ENCODE measurements at regions of chr11 and their contacts with region 1.

Region 1: DNA sequence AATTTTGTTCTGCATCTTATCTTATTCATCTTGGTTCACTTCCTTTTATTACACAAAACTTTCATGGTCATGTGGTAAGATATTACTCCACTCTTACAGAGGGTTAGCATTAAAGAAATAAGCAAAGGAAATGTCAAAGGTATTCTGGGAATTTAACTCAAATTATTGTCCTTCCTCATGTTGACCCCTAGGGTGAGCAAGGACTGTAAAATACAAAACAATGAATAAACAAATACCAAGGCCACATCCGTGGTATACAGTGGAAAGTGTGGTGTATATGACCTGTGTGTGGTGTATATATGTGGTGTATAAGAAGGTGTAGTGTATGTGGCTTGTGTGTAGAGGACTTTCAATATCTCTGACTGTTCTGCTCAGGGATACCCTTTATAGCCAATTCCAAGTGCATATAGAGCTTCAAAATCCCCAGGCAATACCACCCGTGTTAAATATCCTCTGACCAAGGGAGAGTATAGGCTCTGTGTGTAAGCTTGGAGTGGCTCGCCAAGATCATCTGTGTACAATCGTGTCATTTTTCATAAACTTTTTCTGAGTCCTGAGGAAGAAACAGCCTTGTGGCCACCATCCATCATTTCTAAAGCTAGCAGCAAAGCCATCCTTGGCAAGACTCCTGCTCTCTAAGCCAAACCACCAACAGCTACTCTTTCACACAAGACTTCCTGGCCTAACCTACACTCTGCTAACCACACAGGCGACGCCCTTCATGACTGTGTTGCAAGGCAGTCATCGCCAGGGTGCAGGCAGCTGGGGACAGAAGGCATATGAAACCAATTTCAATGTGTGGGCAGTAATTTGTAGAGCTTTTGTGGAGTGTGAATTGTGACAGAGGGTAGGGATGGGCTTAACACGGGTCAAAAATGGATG is 548.0 kb downstream of the ETS1 start:
- DNase-seq: peak; percentile 55 to 94 (median 72)
- ATAC-seq: peak; percentile 96
- H3K4me3 ChIP-seq: peak overlapping the region; percentile 47
- H3K4me3 Mint-ChIP-seq: peak overlapping the region; percentile 72
- H3K27ac ChIP-seq: peak overlapping the region; percentile 29 to 50
- H3K27ac Mint-ChIP-seq: no peak overlapping the region
- H3K4me1 ChIP-seq: peaks cover 64% of the 10 kb centered on the region
- H3K4me1 Mint-ChIP-seq: peaks cover 59% of the 10 kb centered on the region
- H3K27me3 ChIP-seq: no peaks in the 10 kb centered on the region
- H3K27me3 Mint-ChIP-seq: no peaks in the 10 kb centered on the region
- CTCF ChIP-seq: peak; percentile 8

Region 2: GRCh38 chr11:128052912-128053641 is 13.7 kb after region 1 on chr11:
- CTCF ChIA-PET with region 1: interaction called, 13 read pairs
- POLR2A ChIA-PET with region 1: interaction called, 83 read pairs
- intact Hi-C with region 1: loop called in 1 of 2 experiments (anchors 1 kb)
- DNase-seq: peak in 3 of 14 experiments; percentile 55 to 86 (median 60)
- ATAC-seq: peak; percentile 77
- H3K4me3 ChIP-seq: peak overlapping the region; percentile 8
- H3K4me3 Mint-ChIP-seq: peak overlapping the region; percentile 74
- H3K27ac ChIP-seq: peak overlapping the region; percentile 61 to 73
- H3K27ac Mint-ChIP-seq: peak overlapping the region; percentile 74
- H3K4me1 ChIP-seq: peaks cover 46% of the 10 kb centered on the region
- H3K4me1 Mint-ChIP-seq: peaks cover 77% of the 10 kb centered on the region
- H3K27me3 ChIP-seq: no peaks in the 10 kb centered on the region
- H3K27me3 Mint-ChIP-seq: no peaks in the 10 kb centered on the region
- CTCF ChIP-seq: no peak

Region 3: GRCh38 chr11:128066399-128066798 is 27.0 kb after region 1 on chr11:
- CTCF ChIA-PET with region 1: no interaction called
- POLR2A ChIA-PET with region 1: interaction called, 4 read pairs
- intact Hi-C with region 1: loop called in 1 of 2 experiments (anchors 5 kb)
- DNase-seq: no peak
- ATAC-seq: no peak
- H3K4me3 ChIP-seq: no peak overlapping the region
- H3K4me3 Mint-ChIP-seq: no peak overlapping the region
- H3K27ac ChIP-seq: no peak overlapping the region
- H3K27ac Mint-ChIP-seq: no peak overlapping the region
- H3K4me1 ChIP-seq: peaks cover 4% of the 10 kb centered on the region
- H3K4me1 Mint-ChIP-seq: peaks cover 5% of the 10 kb centered on the region
- H3K27me3 ChIP-seq: no peaks in the 10 kb centered on the region
- H3K27me3 Mint-ChIP-seq: no peaks in the 10 kb centered on the region
- CTCF ChIP-seq: no peak

Region 4: DNA sequence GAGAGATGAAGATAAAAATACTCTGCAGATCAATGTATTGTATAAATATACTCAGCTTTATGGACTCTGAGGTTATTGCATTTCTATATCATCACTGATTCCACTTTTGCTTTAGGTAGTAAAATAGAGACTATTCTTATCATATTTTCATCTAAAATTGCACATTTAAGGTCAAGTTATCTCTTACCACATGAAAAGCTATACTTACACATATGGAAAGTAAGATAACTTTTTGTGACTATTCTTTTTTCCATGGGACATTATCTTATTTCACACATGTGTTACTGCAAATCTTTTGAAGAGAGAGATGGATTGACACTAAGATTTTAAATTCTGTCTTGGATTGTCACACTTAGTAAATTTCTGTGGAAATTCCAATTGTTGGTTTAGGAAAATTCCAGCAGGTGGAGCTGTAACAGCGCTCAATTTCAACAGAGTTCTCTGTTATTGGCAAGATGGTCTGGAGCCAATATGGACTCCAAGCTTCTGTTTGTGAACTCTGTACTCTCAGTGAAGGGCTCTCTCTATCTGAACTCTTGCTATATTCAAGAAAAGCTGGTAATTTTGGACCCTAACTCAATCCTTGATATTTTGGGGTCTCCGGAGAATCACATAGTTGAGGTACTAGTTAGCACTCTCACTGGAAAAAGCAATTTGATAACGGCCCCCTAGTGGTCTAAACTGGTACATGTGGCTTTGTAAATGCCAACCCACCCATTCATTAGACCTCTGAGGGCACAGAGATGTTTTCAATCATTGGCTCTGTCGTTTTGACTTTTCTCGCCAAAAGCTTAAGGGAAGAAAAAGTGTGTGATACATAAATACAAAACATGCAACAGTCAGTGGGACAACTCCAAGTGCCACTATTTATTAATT is 118.3 kb after region 1 on chr11:
- CTCF ChIA-PET with region 1: interaction called, 15 read pairs
- POLR2A ChIA-PET with region 1: interaction called, 21 read pairs
- intact Hi-C with region 1: no loop called
- DNase-seq: peak in 13 of 14 experiments; percentile 9 to 84 (median 41)
- ATAC-seq: peak; percentile 94
- H3K4me3 ChIP-seq: peak overlapping the region; percentile 37
- H3K4me3 Mint-ChIP-seq: peak overlapping the region; percentile 87
- H3K27ac ChIP-seq: no peak overlapping the region
- H3K27ac Mint-ChIP-seq: peak overlapping the region; percentile 24
- H3K4me1 ChIP-seq: no peaks in the 10 kb centered on the region
- H3K4me1 Mint-ChIP-seq: peaks cover 8% of the 10 kb centered on the region
- H3K27me3 ChIP-seq: no peaks in the 10 kb centered on the region
- H3K27me3 Mint-ChIP-seq: no peaks in the 10 kb centered on the region
- CTCF ChIP-seq: peak; percentile 100

Region 5: DNA sequence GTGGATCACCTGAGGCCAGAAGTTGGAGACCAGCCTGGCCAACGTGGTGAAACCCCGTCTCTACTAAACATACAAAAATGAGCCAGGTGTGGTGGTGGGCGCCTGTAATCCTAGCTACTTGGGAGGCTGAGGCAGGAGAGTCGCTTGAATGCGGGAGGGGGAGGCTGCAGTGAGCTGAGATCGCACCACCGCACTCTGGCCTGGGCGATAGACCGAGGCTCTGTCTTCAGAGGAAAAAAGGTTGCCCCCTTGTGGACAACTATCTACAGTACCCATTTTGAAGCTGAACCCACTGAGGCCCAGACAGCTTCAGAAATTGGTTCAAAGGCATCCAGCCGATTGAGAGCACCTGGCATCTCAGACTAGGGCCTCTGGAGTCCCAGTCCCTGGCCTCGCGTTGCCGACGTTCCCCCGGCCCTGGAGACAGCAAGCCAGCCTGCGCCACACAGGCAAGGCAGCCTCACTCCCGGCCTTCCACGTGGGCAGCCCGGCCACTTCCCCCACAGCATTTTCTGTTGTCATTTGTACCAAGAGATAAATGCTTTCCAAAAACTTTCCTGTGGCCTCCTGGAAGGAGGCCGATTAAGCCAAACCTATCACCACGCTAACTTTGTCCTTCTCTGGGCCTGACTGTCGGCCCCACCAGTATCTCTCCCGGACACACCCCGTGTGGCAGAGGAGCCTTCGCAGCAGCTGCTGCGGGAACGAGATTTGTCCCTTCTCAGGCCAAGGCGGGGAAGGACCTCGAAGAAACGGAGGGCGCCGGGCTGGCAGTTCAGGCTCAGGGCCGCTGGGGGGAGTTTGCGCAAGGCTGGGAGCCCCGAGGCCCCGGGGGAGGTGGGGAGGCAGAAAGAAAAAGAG is 737.3 kb after region 1 on chr11:
- CTCF ChIA-PET with region 1: no interaction called
- POLR2A ChIA-PET with region 1: no interaction called
- intact Hi-C with region 1: loop called in 1 of 2 experiments (anchors 5 kb)
- DNase-seq: peak in 11 of 14 experiments; percentile 12 to 80 (median 17)
- ATAC-seq: peak; percentile 64
- H3K4me3 ChIP-seq: no peak overlapping the region
- H3K4me3 Mint-ChIP-seq: peak overlapping the region; percentile 14
- H3K27ac ChIP-seq: no peak overlapping the region
- H3K27ac Mint-ChIP-seq: peak overlapping the region; percentile 50
- H3K4me1 ChIP-seq: peaks cover 51% of the 10 kb centered on the region
- H3K4me1 Mint-ChIP-seq: peaks cover 76% of the 10 kb centered on the region
- H3K27me3 ChIP-seq: no peaks in the 10 kb centered on the region
- H3K27me3 Mint-ChIP-seq: no peaks in the 10 kb centered on the region
- CTCF ChIP-seq: peak; percentile 57

Region 6: GRCh38 chr11:128956401-128957201 is 917.2 kb after region 1 on chr11:
- CTCF ChIA-PET with region 1: no interaction called
- POLR2A ChIA-PET with region 1: no interaction called
- intact Hi-C with region 1: loop called in 1 of 2 experiments (anchors 5 kb)
- DNase-seq: peak in 4 of 14 experiments; percentile 31 to 67 (median 60)
- ATAC-seq: no peak
- H3K4me3 ChIP-seq: no peak overlapping the region
- H3K4me3 Mint-ChIP-seq: no peak overlapping the region
- H3K27ac ChIP-seq: no peak overlapping the region
- H3K27ac Mint-ChIP-seq: no peak overlapping the region
- H3K4me1 ChIP-seq: peaks cover 2% of the 10 kb centered on the region
- H3K4me1 Mint-ChIP-seq: peaks cover 4% of the 10 kb centered on the region
- H3K27me3 ChIP-seq: peaks cover 0 to 7% of the 10 kb centered on the region in 2 experiments
- H3K27me3 Mint-ChIP-seq: peaks cover 5% of the 10 kb centered on the region
- CTCF ChIP-seq: peak; percentile 75